Mammary epithelial cell (primary cell): ENCODE measurements at regions of chr12 and their contacts with region 1.

Region 1: GRCh38 chr12:47949441-47950308 is 13.7 kb upstream of the TMEM106C start:
- DNase-seq: peak; percentile 78
- H3K4me3 ChIP-seq: no peak overlapping the region
- H3K27ac ChIP-seq: peak overlapping the region; percentile 78
- H3K4me1 ChIP-seq: peaks cover 84% of the 10 kb centered on the region
- H3K27me3 ChIP-seq: no peaks in the 10 kb centered on the region
- CTCF ChIP-seq: peak; percentile 81 to 96

Region 2: GRCh38 chr12:47863467-47863866 is 86.2 kb before region 1 on chr12:
- CTCF ChIA-PET with region 1: interaction called, 4 read pairs
- dilution Hi-C with region 1: no loop called
- in situ Hi-C with region 1: no loop called
- intact Hi-C with region 1: loop called (anchors 2 kb)
- DNase-seq: peak; percentile 91
- H3K4me3 ChIP-seq: no peak overlapping the region
- H3K27ac ChIP-seq: peak overlapping the region; percentile 76
- H3K4me1 ChIP-seq: peaks cover 46% of the 10 kb centered on the region
- H3K27me3 ChIP-seq: no peaks in the 10 kb centered on the region
- CTCF ChIP-seq: no peak

Region 3: GRCh38 chr12:47870175-47870781 is 79.4 kb before region 1 on chr12:
- CTCF ChIA-PET with region 1: interaction called, 6 read pairs
- dilution Hi-C with region 1: no loop called
- in situ Hi-C with region 1: no loop called
- intact Hi-C with region 1: loop called (anchors 1 kb)
- DNase-seq: no peak
- H3K4me3 ChIP-seq: no peak overlapping the region
- H3K27ac ChIP-seq: no peak overlapping the region
- H3K4me1 ChIP-seq: peaks cover 10% of the 10 kb centered on the region
- H3K27me3 ChIP-seq: no peaks in the 10 kb centered on the region
- CTCF ChIP-seq: peak; percentile 19 to 46

Region 4: DNA sequence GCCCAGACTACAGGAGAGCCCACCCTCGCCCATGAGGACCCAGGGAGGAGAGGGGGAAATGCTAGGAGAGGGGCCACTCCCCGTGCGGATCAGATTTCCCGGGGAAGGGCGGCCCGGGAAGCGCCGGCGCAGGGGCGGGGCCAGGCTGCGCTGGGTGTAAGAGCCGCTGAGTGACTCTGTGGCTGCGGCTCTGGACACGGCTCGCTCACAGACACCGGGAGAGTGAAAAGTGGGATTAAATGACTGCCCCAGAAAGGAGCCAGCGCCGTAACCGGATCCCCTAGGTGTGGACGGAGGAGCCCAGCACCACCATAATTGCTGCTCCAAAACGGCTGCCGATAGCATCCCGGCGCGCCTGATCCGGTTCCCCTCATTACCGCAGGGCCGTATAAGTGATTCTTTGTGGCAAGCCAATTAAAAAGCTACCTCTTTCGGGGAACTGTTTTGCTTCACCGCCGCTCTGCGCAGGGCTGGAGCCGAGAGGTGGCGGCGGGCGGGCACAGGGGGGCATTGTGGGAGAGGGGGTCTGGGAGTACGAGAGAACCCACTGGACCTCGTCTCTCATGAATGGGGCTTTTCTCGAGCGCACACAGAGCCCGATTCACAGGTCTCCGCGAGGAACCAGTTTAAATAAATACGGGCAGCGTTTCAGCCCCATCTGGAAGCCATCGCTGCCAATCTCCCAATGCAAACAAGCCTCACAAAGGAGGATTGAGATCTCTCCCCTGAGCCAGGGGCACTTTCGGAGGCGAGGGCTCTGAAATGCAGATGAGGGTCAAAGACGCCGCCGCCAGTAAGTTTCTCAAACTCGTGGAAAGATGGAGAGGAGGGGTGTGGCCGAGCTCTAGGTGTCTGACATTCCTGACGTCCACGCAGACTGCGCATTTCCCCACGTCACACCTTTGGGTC is 52.1 kb after region 1 on chr12:
- CTCF ChIA-PET with region 1: no interaction called
- dilution Hi-C with region 1: no loop called
- in situ Hi-C with region 1: no loop called
- intact Hi-C with region 1: loop called (anchors 1 kb)
- DNase-seq: peak; percentile 64
- H3K4me3 ChIP-seq: peak overlapping the region; percentile 43 to 74 (median 54)
- H3K27ac ChIP-seq: peak overlapping the region; percentile 78
- H3K4me1 ChIP-seq: peaks cover 25% of the 10 kb centered on the region
- H3K27me3 ChIP-seq: peaks cover 12% of the 10 kb centered on the region
- CTCF ChIP-seq: no peak